CD8-positive, alpha-beta T cell (primary cell): ENCODE measurements at regions of chr1 and their contacts with region 1.

Region 1: GRCh38 chr1:41919764-41920397 is 1.2 kb upstream of the HIVEP3 start:
- DNase-seq: peak; percentile 39 to 90 (median 77)
- ATAC-seq: peak; percentile 81
- H3K4me3 ChIP-seq: peak overlapping the region; percentile 51 to 57
- H3K4me3 Mint-ChIP-seq: peak overlapping the region; percentile 95
- H3K27ac ChIP-seq: peak overlapping the region; percentile 56 to 74
- H3K27ac Mint-ChIP-seq: peak overlapping the region; percentile 98
- H3K4me1 ChIP-seq: peaks cover 43% of the 10 kb centered on the region
- H3K4me1 Mint-ChIP-seq: peaks cover 58% of the 10 kb centered on the region
- H3K27me3 ChIP-seq: no peaks in the 10 kb centered on the region
- H3K27me3 Mint-ChIP-seq: no peaks in the 10 kb centered on the region
- CTCF ChIP-seq: no peak

Region 2: DNA sequence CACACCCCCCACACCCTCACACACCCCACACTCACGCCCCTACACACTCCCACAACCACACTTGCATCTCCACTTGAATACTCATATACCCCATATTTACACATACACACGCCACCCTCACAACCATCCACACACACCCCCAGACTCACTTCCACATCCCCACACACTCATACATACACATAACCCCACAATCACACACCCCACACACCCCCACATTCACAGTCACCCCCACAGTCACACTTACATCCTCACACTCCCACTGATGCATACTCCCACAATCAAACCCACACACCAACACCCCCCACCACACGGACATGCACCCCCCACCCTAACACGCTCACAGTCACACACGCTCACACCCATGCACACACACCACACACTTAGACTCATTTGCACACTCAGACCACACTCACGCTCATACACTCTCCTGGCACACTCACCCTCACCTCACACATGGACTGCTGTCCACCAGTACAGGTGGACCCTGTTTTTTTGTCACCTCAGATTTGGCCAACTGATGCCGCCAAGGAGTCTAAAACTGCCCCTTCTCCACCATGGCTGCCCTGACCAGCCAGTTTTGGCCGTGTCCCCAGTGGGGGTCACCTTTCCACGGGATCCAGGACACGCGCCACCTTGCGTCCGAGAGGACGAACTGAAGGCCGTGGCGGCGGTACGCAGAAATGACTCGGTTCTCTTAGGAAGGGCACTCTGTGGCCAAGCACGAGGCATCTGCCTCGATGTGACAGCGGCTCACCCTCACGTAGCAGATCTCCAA is 390.1 kb before region 1 on chr1:
- CTCF ChIA-PET with region 1: no interaction called
- POLR2A ChIA-PET with region 1: no interaction called
- intact Hi-C with region 1: no loop called
- DNase-seq: no peak
- ATAC-seq: no peak
- H3K4me3 ChIP-seq: no peak overlapping the region
- H3K4me3 Mint-ChIP-seq: no peak overlapping the region
- H3K27ac ChIP-seq: no peak overlapping the region
- H3K27ac Mint-ChIP-seq: peak overlapping the region; percentile 71
- H3K4me1 ChIP-seq: no peaks in the 10 kb centered on the region
- H3K4me1 Mint-ChIP-seq: no peaks in the 10 kb centered on the region
- H3K27me3 ChIP-seq: no peaks in the 10 kb centered on the region
- H3K27me3 Mint-ChIP-seq: no peaks in the 10 kb centered on the region
- CTCF ChIP-seq: no peak

Region 3: GRCh38 chr1:41720861-41721410 is 198.9 kb before region 1 on chr1:
- CTCF ChIA-PET with region 1: no interaction called
- POLR2A ChIA-PET with region 1: no interaction called
- intact Hi-C with region 1: no loop called
- DNase-seq: peak in 1 of 9 experiments; percentile 33
- ATAC-seq: no peak
- H3K4me3 ChIP-seq: peak overlapping the region in 1 of 2 experiments; percentile 30
- H3K4me3 Mint-ChIP-seq: peak overlapping the region; percentile 65
- H3K27ac ChIP-seq: no peak overlapping the region
- H3K27ac Mint-ChIP-seq: no peak overlapping the region
- H3K4me1 ChIP-seq: no peaks in the 10 kb centered on the region
- H3K4me1 Mint-ChIP-seq: peaks cover 7% of the 10 kb centered on the region
- H3K27me3 ChIP-seq: no peaks in the 10 kb centered on the region
- H3K27me3 Mint-ChIP-seq: no peaks in the 10 kb centered on the region
- CTCF ChIP-seq: no peak

Region 4: DNA sequence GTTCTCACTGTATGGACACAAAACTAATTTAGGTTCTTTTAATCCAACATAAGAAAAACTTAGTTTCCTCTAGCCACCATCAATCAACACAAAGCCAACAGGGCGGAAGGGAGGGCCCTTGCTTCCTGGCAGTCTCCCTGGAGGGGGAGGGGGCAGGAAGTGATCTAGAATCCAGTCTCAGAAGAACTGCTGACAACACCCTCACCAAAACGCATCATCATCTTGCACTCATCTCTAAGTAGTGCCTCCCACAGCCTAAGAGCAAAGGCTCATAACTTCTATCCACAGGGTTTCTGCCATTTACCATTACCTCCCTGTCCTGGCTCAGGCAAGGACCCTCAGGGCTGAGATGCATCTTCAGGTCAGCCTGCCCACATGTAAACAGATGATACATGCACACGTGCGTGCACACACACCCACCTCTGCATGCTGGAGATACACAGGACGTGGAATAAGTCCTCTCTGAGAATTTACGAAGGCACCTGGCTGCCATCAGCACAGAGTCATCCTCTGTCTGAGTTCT is 21.6 kb before region 1 on chr1:
- CTCF ChIA-PET with region 1: interaction called, 61 read pairs
- POLR2A ChIA-PET with region 1: interaction called, 89 read pairs
- intact Hi-C with region 1: loop called (anchors 1 kb)
- DNase-seq: peak; percentile 36 to 90 (median 79)
- ATAC-seq: peak; percentile 98
- H3K4me3 ChIP-seq: peak overlapping the region in 1 of 2 experiments; percentile 23
- H3K4me3 Mint-ChIP-seq: peak overlapping the region; percentile 70
- H3K27ac ChIP-seq: peak overlapping the region; percentile 64 to 78
- H3K27ac Mint-ChIP-seq: peak overlapping the region; percentile 97
- H3K4me1 ChIP-seq: peaks cover 46% of the 10 kb centered on the region
- H3K4me1 Mint-ChIP-seq: peaks cover 80% of the 10 kb centered on the region
- H3K27me3 ChIP-seq: no peaks in the 10 kb centered on the region
- H3K27me3 Mint-ChIP-seq: no peaks in the 10 kb centered on the region
- CTCF ChIP-seq: no peak